Posterior vena cava (tissue), 2 donors: ENCODE measurements at regions of chr20 and their contacts with region 1.

Region 1: GRCh38 chr20:9616833-9617489 is 102.6 kb downstream of the LAMP5 start:
- DNase-seq: no peak

Region 2: GRCh38 chr20:9413001-9413400 is 204.0 kb before region 1 on chr20:
- intact Hi-C with region 1: loop called (anchors 1 to 5 kb)
- DNase-seq: no peak

Region 3: GRCh38 chr20:9912858-9913434 is 296.0 kb after region 1 on chr20:
- intact Hi-C with region 1: loop called in 1 of 2 experiments (anchors 10 kb)
- DNase-seq: no peak